AG04450 (cell line): ENCODE measurements at regions of chrX and their contacts with region 1.

Region 1: GRCh38 chrX:12080265-12080664 is 58.0 kb upstream of the FRMPD4 start:
- DNase-seq: peak; percentile 7
- H3K4me3 ChIP-seq: no peak overlapping the region
- H3K27ac ChIP-seq: no peak overlapping the region
- H3K27me3 ChIP-seq: no peaks in the 10 kb centered on the region
- CTCF ChIP-seq: peak; percentile 60

Region 2: DNA sequence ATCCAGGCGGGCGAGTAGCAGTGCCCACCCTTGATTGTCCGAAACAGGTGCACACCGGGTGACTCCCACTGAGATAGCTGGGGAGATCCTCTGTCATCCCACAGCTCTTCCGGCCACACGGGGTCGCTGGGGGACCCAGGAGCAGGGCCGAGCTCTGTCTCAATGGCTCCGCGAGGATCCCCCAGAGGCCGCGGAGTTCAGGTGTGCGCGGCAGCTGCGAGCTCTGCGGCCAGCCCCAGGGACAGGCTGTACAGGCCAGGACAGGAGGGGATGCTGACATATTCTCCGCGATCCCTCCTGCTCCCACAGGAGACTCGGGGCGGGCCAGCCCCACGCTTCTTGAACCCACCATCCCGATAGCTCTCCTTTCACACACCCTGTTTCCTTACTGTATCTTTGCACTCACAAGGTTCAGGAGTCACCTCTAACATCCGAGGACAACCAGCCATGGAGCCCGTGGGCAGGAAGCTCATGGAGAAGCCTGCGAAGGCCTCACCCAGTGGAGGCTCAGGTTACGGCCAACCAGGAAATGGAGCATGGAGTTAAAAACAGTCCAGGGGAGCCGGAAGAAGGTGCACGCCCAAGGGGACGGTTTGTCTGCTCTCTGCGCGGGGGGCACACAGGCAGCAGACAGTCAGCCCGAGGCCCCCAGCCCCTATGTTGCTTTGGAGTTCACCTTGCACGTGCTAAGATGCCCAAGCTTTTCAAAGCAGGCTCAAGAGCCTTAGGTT is 864.9 kb before region 1 on chrX:
- CTCF ChIA-PET with region 1: no interaction called
- POLR2A ChIA-PET with region 1: no interaction called
- DNase-seq: no peak
- H3K4me3 ChIP-seq: no peak overlapping the region
- H3K27ac ChIP-seq: no peak overlapping the region
- H3K27me3 ChIP-seq: no peaks in the 10 kb centered on the region
- CTCF ChIP-seq: no peak

Region 3: GRCh38 chrX:12139934-12140611 is 59.8 kb after region 1 on chrX:
- CTCF ChIA-PET with region 1: interaction called, 11 read pairs
- POLR2A ChIA-PET with region 1: no interaction called
- DNase-seq: no peak
- H3K4me3 ChIP-seq: peak overlapping the region; percentile 64
- H3K27ac ChIP-seq: no peak overlapping the region
- H3K27me3 ChIP-seq: no peaks in the 10 kb centered on the region
- CTCF ChIP-seq: no peak

Region 4: DNA sequence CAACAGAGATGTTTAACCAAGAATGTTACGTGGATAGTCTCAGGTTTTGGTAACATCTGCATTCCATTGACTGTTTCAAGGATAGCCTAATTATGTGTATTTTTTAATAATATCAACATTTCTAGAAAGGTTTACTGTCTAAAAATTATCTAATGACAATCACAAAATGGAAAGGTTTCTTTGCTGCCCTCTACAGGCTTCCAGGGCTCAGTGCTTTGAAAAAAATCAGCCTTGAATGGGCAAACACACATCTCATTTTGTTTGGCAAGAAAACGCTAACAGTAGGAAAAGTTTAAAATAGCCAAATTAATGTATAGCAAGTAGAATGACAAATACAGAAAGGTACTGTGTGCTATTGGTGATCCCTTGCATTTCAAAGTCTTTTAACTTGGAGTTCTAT is 487.6 kb after region 1 on chrX:
- CTCF ChIA-PET with region 1: interaction called, 10 read pairs
- POLR2A ChIA-PET with region 1: no interaction called
- DNase-seq: no peak
- H3K4me3 ChIP-seq: no peak overlapping the region
- H3K27ac ChIP-seq: no peak overlapping the region
- H3K27me3 ChIP-seq: no peaks in the 10 kb centered on the region
- CTCF ChIP-seq: peak; percentile 67

Region 5: GRCh38 chrX:12701628-12702027 is 621.4 kb after region 1 on chrX:
- CTCF ChIA-PET with region 1: interaction called, 16 read pairs
- POLR2A ChIA-PET with region 1: no interaction called
- DNase-seq: peak; percentile 52
- H3K4me3 ChIP-seq: no peak overlapping the region
- H3K27ac ChIP-seq: no peak overlapping the region
- H3K27me3 ChIP-seq: no peaks in the 10 kb centered on the region
- CTCF ChIP-seq: peak; percentile 68